PC-9 (cell line): ENCODE measurements at regions of chr13 and their contacts with region 1.

Region 1: GRCh38 chr13:72384879-72385278 is 342.6 kb downstream of the MZT1 start:
- DNase-seq: peak in 1 of 2 experiments; percentile 10
- H3K4me3 ChIP-seq: no peak overlapping the region
- H3K27ac ChIP-seq: no peak overlapping the region
- H3K4me1 ChIP-seq: no peaks in the 10 kb centered on the region; the same call in 1 of the 2 replicates
- H3K27me3 ChIP-seq: no peaks in the 10 kb centered on the region
- CTCF ChIP-seq: no peak

Region 2: GRCh38 chr13:72166102-72166652 is 218.7 kb before region 1 on chr13:
- CTCF ChIA-PET with region 1: no interaction called
- POLR2A ChIA-PET with region 1: interaction called, 10 read pairs
- intact Hi-C with region 1: no loop called
- DNase-seq: no peak
- H3K4me3 ChIP-seq: no peak overlapping the region
- H3K27ac ChIP-seq: peak overlapping the region; percentile 56
- H3K4me1 ChIP-seq: no peaks in the 10 kb centered on the region; the same call in 1 of the 2 replicates
- H3K27me3 ChIP-seq: no peaks in the 10 kb centered on the region
- CTCF ChIP-seq: no peak

Region 3: GRCh38 chr13:73171926-73172325 is 787.0 kb after region 1 on chr13:
- CTCF ChIA-PET with region 1: no interaction called
- POLR2A ChIA-PET with region 1: no interaction called
- intact Hi-C with region 1: no loop called
- DNase-seq: no peak
- H3K4me3 ChIP-seq: no peak overlapping the region
- H3K27ac ChIP-seq: peak overlapping the region; percentile 25; the same call in 1 of the 2 replicates
- H3K4me1 ChIP-seq: peaks cover 55% of the 10 kb centered on the region
- H3K27me3 ChIP-seq: no peaks in the 10 kb centered on the region
- CTCF ChIP-seq: no peak

Region 4: DNA sequence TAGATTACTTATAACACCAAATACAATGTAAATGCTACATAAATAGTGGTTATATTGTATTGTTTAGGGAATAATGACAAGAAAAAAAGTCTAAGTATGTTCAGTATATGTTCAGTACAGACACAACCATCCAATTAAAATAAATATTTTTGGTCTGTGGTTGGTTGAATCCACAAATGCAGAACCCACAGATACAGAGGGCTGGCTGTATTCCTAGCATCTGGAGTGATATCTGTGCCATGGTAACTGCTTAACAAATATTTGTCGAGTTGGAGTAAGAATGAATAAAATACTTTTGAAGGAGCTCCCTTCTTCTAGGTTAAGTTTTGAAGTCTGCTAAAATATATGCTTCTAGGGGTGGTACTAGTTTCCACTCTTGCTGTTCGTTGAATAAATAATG is 914.9 kb after region 1 on chr13:
- CTCF ChIA-PET with region 1: no interaction called
- POLR2A ChIA-PET with region 1: no interaction called
- intact Hi-C with region 1: no loop called
- DNase-seq: no peak
- H3K4me3 ChIP-seq: no peak overlapping the region
- H3K27ac ChIP-seq: no peak overlapping the region
- H3K4me1 ChIP-seq: no peaks in the 10 kb centered on the region
- H3K27me3 ChIP-seq: no peaks in the 10 kb centered on the region
- CTCF ChIP-seq: no peak